Ascending aorta (tissue), 2 donors: ENCODE measurements at regions of chr10 and their contacts with region 1.

Region 1: DNA sequence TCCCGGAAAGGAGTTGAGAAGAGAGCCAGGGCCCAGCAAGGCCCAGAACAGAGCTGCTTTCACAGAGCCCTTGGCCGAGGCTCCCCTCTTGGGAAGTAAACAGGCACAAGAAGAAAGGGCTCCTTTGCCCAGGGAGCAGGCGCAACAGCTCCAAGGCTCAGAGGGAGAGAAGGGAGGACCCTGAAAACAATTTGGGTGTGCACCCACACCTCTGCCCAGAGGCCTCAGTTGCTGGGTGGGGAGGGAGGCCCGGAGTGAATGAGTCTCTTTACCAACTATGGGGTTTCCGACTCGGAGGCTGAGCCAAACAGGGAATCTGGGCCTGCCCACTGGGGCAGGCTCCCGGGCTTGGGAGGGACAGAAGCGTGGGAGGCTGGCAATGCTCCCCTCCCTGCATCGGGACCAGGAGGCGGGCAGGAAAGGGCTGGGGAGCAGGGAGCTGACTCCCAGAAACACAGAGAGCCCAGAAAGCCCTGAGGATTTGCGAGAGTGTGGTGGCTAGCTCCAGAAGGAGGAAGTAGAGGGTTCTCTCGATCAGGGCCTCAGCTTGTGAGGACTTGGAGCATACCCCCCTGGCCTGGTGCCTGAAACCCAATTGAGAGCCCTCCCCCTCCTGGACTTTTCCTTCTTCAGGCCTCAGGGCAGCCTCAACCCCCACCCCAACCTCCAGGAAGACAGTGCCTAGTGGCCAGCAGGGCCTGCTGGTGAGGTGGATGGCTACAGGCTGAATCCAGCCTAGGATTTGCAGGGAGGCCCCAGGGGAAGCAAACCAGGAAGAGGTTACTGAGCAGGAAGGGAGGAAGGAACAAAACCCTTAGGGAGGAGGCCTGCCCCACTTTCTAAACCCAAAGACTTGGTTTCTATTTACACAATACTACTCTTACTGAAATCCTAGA is 6.2 kb downstream of the C10orf105 start:
- DNase-seq: peak; percentile 51 to 94
- H3K4me3 ChIP-seq: peak overlapping the region in 1 of 2 donors; percentile 15
- H3K27ac ChIP-seq: peak overlapping the region; percentile 86 to 89
- H3K4me1 ChIP-seq: peaks cover 22 to 42% of the 10 kb centered on the region in 2 donors
- H3K27me3 ChIP-seq: no peaks in the 10 kb centered on the region
- CTCF ChIP-seq: peak in 1 of 3 experiments; percentile 16

Region 2: DNA sequence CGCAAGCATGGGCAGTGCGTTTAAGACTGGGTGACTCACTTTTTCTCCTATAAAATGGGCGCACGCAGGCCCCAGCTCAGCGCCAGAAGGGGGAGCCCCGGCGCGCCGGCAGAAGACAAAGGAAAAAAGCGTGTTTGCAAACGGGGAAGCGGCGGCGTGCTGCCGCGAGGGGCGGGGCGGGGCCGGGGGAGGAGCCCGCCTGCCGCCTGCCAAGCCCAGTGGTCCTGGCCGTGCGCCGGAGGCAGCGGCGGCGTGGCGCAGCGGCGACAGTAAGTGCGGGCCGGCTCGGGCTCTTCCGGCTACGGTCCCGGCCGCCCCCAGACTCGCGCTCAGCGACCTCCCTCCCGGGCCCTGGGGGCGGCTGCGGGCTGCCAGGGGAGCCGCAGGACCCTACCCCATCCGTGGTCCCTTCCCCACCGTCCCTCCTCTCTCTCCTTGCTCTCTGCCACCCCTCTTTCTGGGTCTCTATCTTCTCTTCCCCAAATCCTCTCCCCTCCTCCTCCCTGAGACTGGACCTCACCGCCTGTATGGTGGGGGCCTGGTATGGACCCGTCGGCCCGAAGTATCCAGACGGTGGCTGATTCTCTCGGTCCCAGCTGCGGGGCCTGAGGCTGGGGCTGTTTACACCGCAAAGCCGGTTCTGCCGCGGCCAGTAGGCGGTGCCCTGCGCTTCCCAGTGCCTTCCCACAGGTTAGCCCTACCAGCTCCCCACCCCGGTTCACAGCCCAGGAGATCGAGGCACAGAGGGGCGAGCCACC is 394.2 kb before region 1 on chr10 and contains the start of gene SLC29A3:
- intact Hi-C with region 1: loop called (anchors 5 kb)
- DNase-seq: peak in 1 of 2 donors; percentile 86
- H3K4me3 ChIP-seq: peak within 1 kb of the TSS; percentile 74 to 88
- H3K27ac ChIP-seq: peak within 1 kb of the TSS; percentile 54 to 69
- H3K4me1 ChIP-seq: peaks cover 5 to 7% of the 10 kb centered on the region in 2 donors
- H3K27me3 ChIP-seq: no peaks in the 10 kb centered on the region
- CTCF ChIP-seq: peak; percentile 23 to 69 (median 61)
- total RNA-seq, gene SLC29A3: 0.64 TPM

Region 3: GRCh38 chr10:71748671-71749191 is 35.3 kb after region 1 on chr10:
- intact Hi-C with region 1: no loop called
- DNase-seq: peak; percentile 52 to 83
- H3K4me3 ChIP-seq: no peak overlapping the region
- H3K27ac ChIP-seq: peak overlapping the region; percentile 32 to 37
- H3K4me1 ChIP-seq: peaks cover 0 to 3% of the 10 kb centered on the region in 2 donors
- H3K27me3 ChIP-seq: no peaks in the 10 kb centered on the region
- CTCF ChIP-seq: no peak

Region 4: GRCh38 chr10:71771821-71772617 is 58.6 kb after region 1 on chr10:
- intact Hi-C with region 1: loop called (anchors 1 kb)
- DNase-seq: peak; percentile 64 to 93
- H3K4me3 ChIP-seq: peak overlapping the region; percentile 69 to 85
- H3K27ac ChIP-seq: peak overlapping the region; percentile 94 to 98
- H3K4me1 ChIP-seq: peaks cover 40 to 54% of the 10 kb centered on the region in 2 donors
- H3K27me3 ChIP-seq: no peaks in the 10 kb centered on the region
- CTCF ChIP-seq: no peak

Region 5: GRCh38 chr10:71893920-71894319 is 180.5 kb after region 1 on chr10:
- intact Hi-C with region 1: loop called (anchors 10 kb)
- DNase-seq: no peak
- H3K4me3 ChIP-seq: no peak overlapping the region
- H3K27ac ChIP-seq: no peak overlapping the region
- H3K4me1 ChIP-seq: no peaks in the 10 kb centered on the region
- H3K27me3 ChIP-seq: no peaks in the 10 kb centered on the region
- CTCF ChIP-seq: no peak